HepG2 (cell line): ENCODE measurements at regions of chr10 and their contacts with region 1.

Region 1: GRCh38 chr10:15106352-15107013 is 9.3 kb downstream of the RPP38 start:
- DNase-seq: peak; percentile 66
- ATAC-seq: peak; percentile 90
- H3K4me3 ChIP-seq: no peak overlapping the region
- H3K27ac ChIP-seq: no peak overlapping the region
- H3K4me1 ChIP-seq: peaks cover 20% of the 10 kb centered on the region
- H3K27me3 ChIP-seq: no peaks in the 10 kb centered on the region
- CTCF ChIP-seq: peak; percentile 88
- EP300 ChIP-seq: no peak
- POLR2A ChIP-seq: no peak
- RAD21 ChIP-seq: peak; percentile 58; the same call in 1 of the 2 replicates

Region 2: GRCh38 chr10:14954001-14954770 is 152.3 kb before region 1 on chr10 and contains the start of gene DCLRE1C:
- CTCF ChIA-PET with region 1: no interaction called
- POLR2A ChIA-PET with region 1: interaction called, 3 read pairs
- in situ Hi-C with region 1: no loop called
- intact Hi-C with region 1: loop called (anchors 5 kb)
- DNase-seq: peak; percentile 88
- ATAC-seq: peak; percentile 95
- H3K4me3 ChIP-seq: peak within 1 kb of the TSS; percentile 57 to 82 (median 67)
- H3K27ac ChIP-seq: peak within 1 kb of the TSS; percentile 85
- H3K4me1 ChIP-seq: peaks cover 47% of the 10 kb centered on the region
- H3K27me3 ChIP-seq: no peaks in the 10 kb centered on the region; a peak in 1 of 5 replicates
- CTCF ChIP-seq: no peak; the same call in 1 of the 2 replicates
- EP300 ChIP-seq: no peak; a peak in 1 of 4 replicates
- POLR2A ChIP-seq: peak; percentile 78 to 84
- RAD21 ChIP-seq: peak; percentile 30; the same call in 1 of the 2 replicates
- total RNA-seq, gene DCLRE1C: 10.3 and 11.5 TPM in 2 replicates

Region 3: GRCh38 chr10:14995964-14996565 is 110.4 kb before region 1 on chr10:
- CTCF ChIA-PET with region 1: interaction called, 3 read pairs
- POLR2A ChIA-PET with region 1: no interaction called
- in situ Hi-C with region 1: loop called (anchors 10 kb)
- intact Hi-C with region 1: loop called (anchors 1 kb)
- DNase-seq: no peak
- ATAC-seq: no peak
- H3K4me3 ChIP-seq: no peak overlapping the region
- H3K27ac ChIP-seq: no peak overlapping the region
- H3K4me1 ChIP-seq: peaks cover 28% of the 10 kb centered on the region
- H3K27me3 ChIP-seq: no peaks in the 10 kb centered on the region; a peak in 1 of 5 replicates
- CTCF ChIP-seq: no peak
- EP300 ChIP-seq: no peak
- POLR2A ChIP-seq: no peak
- RAD21 ChIP-seq: no peak